Heart left ventricle (tissue), 16 donors: ENCODE measurements at regions of chr3 and their contacts with region 1.

Region 1: DNA sequence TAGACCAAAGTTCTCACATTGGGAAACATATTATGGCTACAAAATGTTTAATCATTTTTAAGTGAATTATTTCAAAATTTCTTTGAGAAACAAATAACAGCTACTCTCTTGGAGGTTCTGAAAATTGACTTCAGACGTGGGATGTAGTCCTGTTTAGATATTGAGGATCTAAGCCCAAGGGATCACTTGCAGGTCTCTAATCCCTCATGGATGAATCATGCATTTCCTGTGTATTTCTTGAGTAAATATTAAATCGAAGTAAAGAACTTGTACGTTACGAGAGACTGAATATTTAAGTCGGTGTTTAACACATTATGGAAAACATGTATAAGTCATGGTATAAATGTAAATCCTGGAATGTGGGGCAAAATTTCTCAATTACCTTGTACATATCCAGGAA is 119.8 kb downstream of the EPHA3 start:
- DNase-seq: no peak
- ATAC-seq: peak in 1 of 4 donors; percentile 63
- H3K4me3 ChIP-seq: no peak overlapping the region
- H3K27ac ChIP-seq: no peak overlapping the region
- H3K4me1 ChIP-seq: peaks cover 0 to 11% (median 0%) of the 10 kb centered on the region in 12 donors
- H3K27me3 ChIP-seq: no peaks in the 10 kb centered on the region
- CTCF ChIP-seq: no peak
- POLR2A ChIP-seq: no peak

Region 2: DNA sequence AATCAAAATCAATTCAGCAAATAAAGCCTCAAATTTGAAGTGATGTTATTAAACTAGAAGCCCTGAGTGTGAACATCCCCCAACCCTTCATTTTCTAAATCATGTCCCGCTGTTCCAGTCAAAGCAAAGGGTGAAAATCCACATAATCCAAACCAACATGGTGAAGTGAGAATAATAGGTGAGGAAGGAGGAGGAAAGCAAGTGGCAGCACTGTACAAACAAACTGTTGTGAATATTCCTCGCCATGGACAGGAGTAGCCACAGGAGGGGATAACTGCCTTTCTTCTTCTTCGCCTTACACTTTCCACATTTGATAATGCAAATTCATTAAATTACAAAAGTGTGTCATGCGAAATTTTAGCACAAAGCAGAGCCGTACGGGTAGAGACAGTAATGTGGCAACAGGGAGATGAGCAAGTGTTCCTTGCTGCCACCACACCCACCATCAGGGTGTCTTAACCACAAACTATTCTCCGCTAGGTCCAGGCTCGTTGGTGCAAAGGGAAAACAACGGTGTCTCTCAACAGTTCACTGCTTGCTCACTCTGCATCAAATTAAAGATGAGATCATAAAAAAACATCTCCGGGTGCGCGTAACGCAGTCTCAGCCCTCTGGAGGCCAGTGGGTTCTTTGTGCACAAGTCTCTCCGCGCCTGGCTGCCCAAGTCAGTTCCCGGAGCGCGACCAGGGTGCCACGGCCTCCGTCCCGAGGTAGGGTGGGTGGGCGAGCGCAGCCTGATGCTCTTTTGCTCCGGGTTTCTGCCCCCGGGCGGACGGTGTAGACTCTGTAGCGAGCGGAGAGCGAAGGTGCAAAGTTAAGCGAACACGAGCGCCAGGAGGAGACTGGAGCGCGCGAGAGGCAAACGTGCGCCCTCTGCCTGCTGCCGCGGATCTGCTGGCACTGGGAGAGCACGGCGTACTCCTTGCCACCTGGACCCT is 113.0 kb before region 1 on chr3:
- intact Hi-C with region 1: loop called in 1 of 10 experiments (anchors 10 kb)
- DNase-seq: peak; percentile 67 to 77 (median 70)
- ATAC-seq: peak; percentile 87 to 99 (median 97)
- H3K4me3 ChIP-seq: peak overlapping the region in 11 of 12 donors; percentile 33 to 66 (median 55)
- H3K27ac ChIP-seq: peak overlapping the region in 10 of 12 donors; percentile 20 to 74 (median 61)
- H3K4me1 ChIP-seq: peaks cover 0 to 9% (median 0%) of the 10 kb centered on the region in 12 donors
- H3K27me3 ChIP-seq: peaks cover 0 to 4% (median 0%) of the 10 kb centered on the region in 9 donors
- CTCF ChIP-seq: peak; percentile 47 to 82 (median 66)
- POLR2A ChIP-seq: no peak

Region 3: DNA sequence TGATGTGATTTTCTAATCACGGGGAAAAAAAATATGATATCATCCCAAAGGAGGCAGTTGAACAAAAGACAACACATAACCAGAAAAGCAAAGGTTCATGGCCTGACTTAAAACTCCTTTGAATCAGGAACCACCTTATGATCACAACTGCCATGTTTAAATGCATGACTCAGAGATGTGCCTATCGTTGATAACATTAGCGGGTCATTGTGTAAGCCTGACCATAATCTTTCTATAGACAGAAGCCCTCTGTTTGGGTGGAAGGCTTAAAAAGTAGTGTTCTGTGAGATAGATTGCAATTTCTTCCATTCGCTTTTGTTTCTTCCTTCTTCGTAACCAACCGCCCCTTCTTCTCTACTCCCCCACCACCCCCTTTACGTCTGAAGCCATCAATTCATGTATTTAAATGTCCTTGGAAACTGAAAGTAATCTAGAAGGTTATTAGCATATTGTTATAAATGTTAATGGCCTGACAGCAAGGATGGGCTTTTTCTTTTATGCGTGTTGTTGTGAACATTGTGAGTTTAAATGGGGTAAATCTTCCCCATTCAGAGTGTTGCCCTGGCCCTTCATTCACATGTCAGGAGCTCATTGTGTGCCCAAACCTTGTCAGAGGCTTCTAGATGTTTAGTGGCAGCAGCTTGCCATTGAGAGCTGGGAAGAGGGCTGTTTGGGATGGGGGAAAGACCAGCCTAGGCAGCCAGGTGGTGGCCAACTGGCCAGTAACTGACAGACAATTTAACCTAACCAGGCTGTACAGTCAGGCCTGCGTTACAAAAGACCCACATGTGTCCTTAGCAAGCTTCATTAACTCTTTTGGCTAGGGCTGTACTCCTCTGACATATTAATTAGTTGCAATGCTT is 55.3 kb before region 1 on chr3:
- intact Hi-C with region 1: loop called in 1 of 10 experiments (anchors 2 kb)
- DNase-seq: no peak
- ATAC-seq: no peak
- H3K4me3 ChIP-seq: no peak overlapping the region
- H3K27ac ChIP-seq: no peak overlapping the region
- H3K4me1 ChIP-seq: peaks cover 0 to 2% (median 0%) of the 10 kb centered on the region in 12 donors
- H3K27me3 ChIP-seq: no peaks in the 10 kb centered on the region
- CTCF ChIP-seq: no peak
- POLR2A ChIP-seq: no peak